ENCODE measurements at regions of chrX and their contacts with region 1.

Region 1: GRCh38 chrX:37926700-37927099 is 79.3 kb upstream of the DYNLT3 start:
- DNase-seq: peak in 1 of 2 donors; percentile 51
- H3K4me3 ChIP-seq: no peak overlapping the region
- H3K27ac ChIP-seq: no peak overlapping the region
- H3K4me1 ChIP-seq: no peaks in the 10 kb centered on the region
- H3K27me3 ChIP-seq: no peaks in the 10 kb centered on the region
- CTCF ChIP-seq: peak in 5 of 7 experiments; percentile 24 to 62 (median 48)
- EP300 ChIP-seq: no peak
- POLR2A ChIP-seq: no peak

Region 2: GRCh38 chrX:38166478-38167083 is 239.9 kb after region 1 on chrX:
- intact Hi-C with region 1: loop called (anchors 10 kb)
- DNase-seq: peak in 1 of 2 donors; percentile 54
- H3K4me3 ChIP-seq: no peak overlapping the region
- H3K27ac ChIP-seq: no peak overlapping the region
- H3K4me1 ChIP-seq: no peaks in the 10 kb centered on the region
- H3K27me3 ChIP-seq: peaks cover 0 to 5% (median 0%) of the 10 kb centered on the region in 3 donors
- CTCF ChIP-seq: peak in 5 of 7 experiments; percentile 5 to 63 (median 51)
- EP300 ChIP-seq: no peak
- POLR2A ChIP-seq: no peak